Tibial artery (tissue), 4 donors: ENCODE measurements at regions of chr16 and their contacts with region 1.

Region 1: DNA sequence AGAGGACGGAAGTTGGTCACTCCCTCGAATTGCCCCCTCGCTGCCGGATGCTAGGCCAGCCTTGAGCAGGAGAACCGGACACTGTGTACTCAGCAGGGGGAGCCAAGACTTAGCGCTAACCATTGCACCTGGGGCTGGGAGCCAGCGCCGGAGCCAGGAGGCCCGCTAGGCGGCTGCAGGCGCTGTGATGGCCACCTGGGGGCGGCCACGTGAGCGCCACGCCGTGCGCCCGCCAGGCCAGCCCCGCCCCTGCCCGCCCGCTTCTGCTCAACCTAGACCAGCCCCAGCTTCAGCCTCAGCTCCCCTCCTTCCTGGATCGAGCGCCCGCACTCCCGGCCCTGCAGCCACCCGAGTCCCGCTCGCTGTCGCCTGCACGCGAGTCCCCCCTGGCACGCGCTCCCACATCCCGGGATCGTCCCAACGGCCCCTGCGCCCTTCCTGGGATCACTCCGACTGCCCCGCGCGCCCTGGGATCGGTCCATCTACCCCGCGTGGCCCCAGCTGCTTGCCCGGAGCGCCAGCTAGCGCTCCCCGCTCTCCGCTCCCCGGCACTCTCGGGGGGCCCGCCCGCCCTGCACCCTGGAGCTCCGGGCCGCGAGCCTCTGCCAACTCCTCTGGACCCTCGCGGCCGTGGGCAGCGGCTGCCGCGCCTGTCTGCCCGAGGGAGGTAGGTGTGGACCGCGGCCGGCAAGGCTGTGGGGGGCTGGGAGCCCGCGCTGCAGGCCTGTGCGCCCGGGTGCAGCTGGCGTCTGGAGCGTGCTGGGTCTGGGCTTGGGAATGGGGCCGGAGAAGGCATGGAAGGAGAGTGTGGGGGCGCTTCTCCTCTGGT is at the start of gene EEF2K:
- DNase-seq: peak; percentile 95 to 98
- H3K4me3 ChIP-seq: peak within 1 kb of the TSS; percentile 90 to 95
- H3K27ac ChIP-seq: peak within 1 kb of the TSS; percentile 87 to 89
- H3K4me1 ChIP-seq: peaks cover 0 to 48% (median 39%) of the 10 kb centered on the region in 4 donors
- H3K27me3 ChIP-seq: no peaks in the 10 kb centered on the region
- CTCF ChIP-seq: peak; percentile 92 to 93

Region 2: DNA sequence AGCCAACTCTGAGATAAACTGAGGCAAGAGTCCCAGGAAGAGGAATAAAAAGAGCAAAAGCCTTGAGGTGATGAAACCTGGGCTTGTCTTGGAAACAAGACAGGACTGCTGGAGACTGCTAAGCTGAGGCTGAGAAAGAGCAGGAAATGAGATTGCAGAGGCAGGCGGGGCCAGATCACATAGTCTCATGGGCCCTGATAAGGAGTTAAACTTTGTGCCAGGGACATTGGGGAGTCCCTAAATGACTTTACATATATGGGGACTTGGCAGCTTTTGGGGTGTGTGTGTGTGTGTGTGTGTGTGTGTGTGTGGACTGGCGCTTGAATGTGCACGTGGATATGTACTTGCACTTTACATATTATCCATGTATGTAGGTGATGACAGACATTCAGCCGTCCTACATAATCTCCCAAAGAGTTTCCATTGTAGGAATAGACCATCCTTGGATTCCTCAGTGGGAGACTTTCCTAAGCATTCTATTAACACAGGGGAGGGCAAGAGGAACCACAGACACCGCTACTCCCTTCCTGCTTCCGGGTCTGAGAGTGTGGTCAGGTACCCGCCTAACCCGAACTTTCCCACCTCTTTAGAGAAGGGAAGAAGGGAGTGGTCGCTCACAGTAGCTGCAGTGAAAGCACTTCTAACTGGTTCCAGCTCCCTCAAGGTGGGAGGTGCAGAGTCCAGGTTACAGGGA is 1182.6 kb before region 1 on chr16:
- intact Hi-C with region 1: no loop called
- DNase-seq: no peak
- H3K4me3 ChIP-seq: no peak overlapping the region
- H3K27ac ChIP-seq: no peak overlapping the region
- H3K4me1 ChIP-seq: no peaks in the 10 kb centered on the region
- H3K27me3 ChIP-seq: no peaks in the 10 kb centered on the region
- CTCF ChIP-seq: no peak

Region 3: DNA sequence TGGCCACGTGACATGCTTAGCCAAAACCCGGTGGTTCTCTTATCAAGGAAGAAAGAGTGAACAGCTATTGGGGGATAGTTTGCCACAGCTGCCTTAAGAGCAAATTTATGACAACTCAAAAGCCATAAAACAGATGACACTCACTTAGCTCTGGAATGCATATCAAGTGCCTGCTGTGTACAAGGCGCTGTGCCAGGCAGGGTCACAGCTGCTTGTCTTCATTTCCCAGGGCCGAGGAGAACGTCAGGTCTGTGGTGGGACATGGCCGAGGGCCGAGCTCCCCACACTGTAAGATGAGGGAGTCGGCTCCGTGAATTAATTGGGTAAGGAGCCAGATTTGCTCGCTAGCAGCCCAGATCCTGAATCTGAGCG is 13.8 kb after region 1 on chr16:
- intact Hi-C with region 1: loop called (anchors 2 kb)
- DNase-seq: no peak
- H3K4me3 ChIP-seq: no peak overlapping the region
- H3K27ac ChIP-seq: peak overlapping the region; percentile 73 to 80
- H3K4me1 ChIP-seq: peaks cover 0 to 89% (median 57%) of the 10 kb centered on the region in 4 donors
- H3K27me3 ChIP-seq: no peaks in the 10 kb centered on the region
- CTCF ChIP-seq: no peak